ENCODE measurements at regions of chr22 and their contacts with region 1.

Region 1: GRCh38 chr22:37486224-37486845 is at the start of gene MFNG:
- DNase-seq: peak; percentile 61 to 84 (median 64)
- H3K4me3 ChIP-seq: peak within 1 kb of the TSS; percentile 85 to 87
- H3K4me3 Mint-ChIP-seq: peak within 1 kb of the TSS; percentile 89 to 98 (median 96)
- H3K27ac ChIP-seq: peak within 1 kb of the TSS; percentile 85
- H3K27ac Mint-ChIP-seq: peak within 1 kb of the TSS; percentile 94 to 98 (median 97)
- H3K4me1 ChIP-seq: peaks cover 63% of the 10 kb centered on the region
- H3K4me1 Mint-ChIP-seq: peaks cover 39 to 87% (median 57%) of the 10 kb centered on the region in 4 donors
- H3K27me3 ChIP-seq: no peaks in the 10 kb centered on the region
- H3K27me3 Mint-ChIP-seq: no peaks in the 10 kb centered on the region
- total RNA-seq, gene MFNG: 213 to 218 TPM

Region 2: GRCh38 chr22:37157516-37158289 is 328.6 kb before region 1 on chr22:
- CTCF ChIA-PET with region 1: no interaction called
- POLR2A ChIA-PET with region 1: no interaction called
- intact Hi-C with region 1: no loop called
- DNase-seq: no peak
- H3K4me3 ChIP-seq: no peak overlapping the region
- H3K4me3 Mint-ChIP-seq: peak overlapping the region in 1 of 8 donors; percentile 11
- H3K27ac ChIP-seq: no peak overlapping the region
- H3K27ac Mint-ChIP-seq: peak overlapping the region in 5 of 7 donors; percentile 8 to 89 (median 67)
- H3K4me1 ChIP-seq: peaks cover 14% of the 10 kb centered on the region
- H3K4me1 Mint-ChIP-seq: peaks cover 11 to 45% (median 32%) of the 10 kb centered on the region in 4 donors
- H3K27me3 ChIP-seq: no peaks in the 10 kb centered on the region
- H3K27me3 Mint-ChIP-seq: no peaks in the 10 kb centered on the region

Region 3: DNA sequence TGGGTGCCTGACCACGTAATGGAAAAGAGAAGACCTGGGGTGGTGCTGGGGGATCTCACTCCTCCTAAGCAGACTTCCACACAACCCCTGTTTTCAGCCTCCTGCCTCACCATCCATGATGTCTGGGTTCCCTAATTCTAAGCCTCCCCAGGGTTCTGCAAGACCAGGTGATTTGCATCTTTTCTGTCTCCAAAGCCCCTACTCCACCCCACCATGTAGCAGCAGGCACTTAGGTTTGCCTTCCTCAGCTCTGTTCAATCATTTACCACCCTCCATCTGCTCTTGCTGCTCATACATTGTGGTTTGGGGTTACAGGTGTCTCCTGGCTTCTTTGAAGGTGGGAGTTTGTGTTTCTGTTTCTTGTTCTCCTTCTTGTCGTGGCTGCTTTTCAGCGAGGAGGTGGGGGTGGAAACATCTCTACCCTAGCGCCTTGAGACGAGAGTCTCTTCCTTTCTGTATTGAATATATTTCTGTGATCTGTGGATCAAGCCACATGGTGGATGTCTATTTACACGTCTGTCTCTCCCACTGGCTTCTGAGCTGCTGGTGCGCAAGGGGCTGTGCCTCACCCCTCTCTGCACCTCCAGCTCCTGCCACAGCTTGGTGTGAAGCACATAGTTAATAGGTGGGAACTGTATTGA is 267.4 kb before region 1 on chr22:
- CTCF ChIA-PET with region 1: no interaction called
- POLR2A ChIA-PET with region 1: interaction called, 14 read pairs
- intact Hi-C with region 1: no loop called
- DNase-seq: peak; percentile 86 to 96 (median 91)
- H3K4me3 ChIP-seq: peak overlapping the region; percentile 15 to 51
- H3K4me3 Mint-ChIP-seq: peak overlapping the region; percentile 67 to 90 (median 84)
- H3K27ac ChIP-seq: peak overlapping the region; percentile 58
- H3K27ac Mint-ChIP-seq: peak overlapping the region; percentile 87 to 98 (median 95)
- H3K4me1 ChIP-seq: peaks cover 73% of the 10 kb centered on the region
- H3K4me1 Mint-ChIP-seq: peaks cover 58 to 79% (median 64%) of the 10 kb centered on the region in 4 donors
- H3K27me3 ChIP-seq: no peaks in the 10 kb centered on the region
- H3K27me3 Mint-ChIP-seq: no peaks in the 10 kb centered on the region

Region 4: DNA sequence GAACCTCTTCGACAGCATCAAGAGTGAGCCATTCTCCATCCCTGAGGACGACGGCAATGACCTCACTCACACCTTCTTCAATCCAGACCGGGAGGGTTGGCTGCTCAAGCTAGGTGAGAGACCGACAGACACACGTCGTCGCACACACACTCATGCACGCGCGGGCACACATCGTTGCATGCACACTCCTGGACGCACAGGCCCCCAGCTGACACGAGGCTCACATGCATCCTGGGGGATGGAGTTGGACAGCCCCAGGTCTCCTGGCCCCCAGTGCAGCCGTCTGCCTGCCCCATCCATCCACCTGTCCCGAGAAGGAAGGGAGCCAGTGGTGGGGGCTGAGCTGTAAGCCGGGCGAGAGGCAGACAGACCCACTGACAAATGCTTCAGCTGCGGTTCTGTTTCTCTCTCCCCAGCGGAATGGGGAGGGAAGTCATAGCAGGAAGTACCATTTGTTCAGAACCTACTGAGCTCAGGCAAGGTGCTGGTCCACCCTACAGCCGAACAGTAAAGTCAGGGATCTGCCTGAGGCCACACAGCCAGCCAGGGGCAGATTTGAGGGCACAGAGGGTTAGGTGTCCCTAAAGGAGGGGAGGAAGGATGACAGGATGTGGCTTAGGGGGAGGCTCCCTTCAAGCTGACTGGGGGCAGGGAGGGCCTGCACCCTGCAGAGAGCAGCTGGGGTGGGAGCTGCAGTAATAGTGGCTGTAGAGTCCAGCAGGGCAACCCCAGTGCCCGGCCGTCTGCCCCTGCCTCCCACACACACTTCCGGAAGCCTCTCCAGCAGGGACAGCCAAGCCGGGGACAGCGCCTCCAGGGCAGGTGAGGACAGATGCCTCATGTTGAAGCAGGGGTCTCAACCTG is 176.9 kb before region 1 on chr22:
- CTCF ChIA-PET with region 1: no interaction called
- POLR2A ChIA-PET with region 1: interaction called, 19 read pairs
- intact Hi-C with region 1: no loop called
- DNase-seq: peak; percentile 61 to 72 (median 67)
- H3K4me3 ChIP-seq: peak overlapping the region; percentile 49 to 54
- H3K4me3 Mint-ChIP-seq: peak overlapping the region; percentile 79 to 90 (median 82)
- H3K27ac ChIP-seq: peak overlapping the region; percentile 59
- H3K27ac Mint-ChIP-seq: peak overlapping the region; percentile 70 to 100 (median 92)
- H3K4me1 ChIP-seq: peaks cover 78% of the 10 kb centered on the region
- H3K4me1 Mint-ChIP-seq: peaks cover 56 to 94% (median 70%) of the 10 kb centered on the region in 4 donors
- H3K27me3 ChIP-seq: no peaks in the 10 kb centered on the region
- H3K27me3 Mint-ChIP-seq: no peaks in the 10 kb centered on the region

Region 5: GRCh38 chr22:37498289-37498909 is 12.1 kb after region 1 on chr22:
- CTCF ChIA-PET with region 1: interaction called, 12 read pairs
- POLR2A ChIA-PET with region 1: interaction called, 27 read pairs
- intact Hi-C with region 1: no loop called
- DNase-seq: peak; percentile 68 to 72 (median 70)
- H3K4me3 ChIP-seq: no peak overlapping the region
- H3K4me3 Mint-ChIP-seq: no peak overlapping the region
- H3K27ac ChIP-seq: no peak overlapping the region
- H3K27ac Mint-ChIP-seq: no peak overlapping the region
- H3K4me1 ChIP-seq: peaks cover 19% of the 10 kb centered on the region
- H3K4me1 Mint-ChIP-seq: peaks cover 8 to 25% (median 16%) of the 10 kb centered on the region in 4 donors
- H3K27me3 ChIP-seq: peaks cover 3% of the 10 kb centered on the region
- H3K27me3 Mint-ChIP-seq: no peaks in the 10 kb centered on the region

Region 6: DNA sequence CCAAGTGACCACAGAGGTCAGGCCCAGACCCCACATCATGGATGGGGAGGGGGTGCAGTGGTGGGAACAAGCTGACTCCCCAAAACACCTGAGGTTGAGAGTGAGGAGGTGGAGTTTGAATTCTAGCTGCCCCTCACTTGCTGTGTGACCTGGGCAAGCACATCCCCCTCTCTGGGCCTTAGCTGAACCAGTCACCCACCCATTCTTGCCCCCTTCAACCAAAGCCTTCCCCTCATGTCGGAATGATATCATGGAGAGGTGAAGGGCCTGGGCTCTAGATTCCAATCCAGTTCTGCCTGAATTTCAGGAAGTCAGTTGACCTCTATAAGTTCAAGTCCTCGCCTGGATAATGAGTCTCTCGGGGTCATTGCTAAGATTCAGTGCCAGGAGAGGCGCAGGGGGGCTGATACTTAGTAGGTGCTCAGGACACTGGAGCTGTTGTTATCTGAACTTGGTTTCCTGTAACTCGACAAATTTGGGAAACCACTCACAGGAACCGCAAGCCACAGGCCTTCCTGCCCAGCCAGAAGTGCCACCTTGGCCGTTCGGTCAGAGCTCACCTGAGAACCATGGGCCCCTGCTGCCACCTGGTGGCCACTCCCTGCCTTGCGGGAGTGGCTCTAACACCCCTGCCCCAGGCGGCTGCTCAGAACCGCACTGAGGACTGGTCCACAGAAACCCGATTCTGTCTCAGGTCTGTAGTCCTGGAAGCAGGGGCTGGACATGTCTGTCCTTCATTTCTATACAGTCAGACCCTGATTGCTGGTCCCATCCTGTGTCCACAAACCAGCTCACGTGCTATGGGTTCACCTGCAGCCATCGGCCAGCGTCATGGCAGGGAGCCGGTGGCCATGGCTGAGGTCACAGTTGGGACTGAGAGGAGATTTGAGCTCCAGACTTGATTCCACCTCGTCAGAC is 80.8 kb after region 1 on chr22:
- CTCF ChIA-PET with region 1: interaction called, 6 read pairs
- POLR2A ChIA-PET with region 1: interaction called, 15 read pairs
- intact Hi-C with region 1: loop called (anchors 2 kb)
- DNase-seq: peak; percentile 87 to 91 (median 89)
- H3K4me3 ChIP-seq: peak overlapping the region; percentile 6 to 15
- H3K4me3 Mint-ChIP-seq: peak overlapping the region; percentile 58 to 85 (median 70)
- H3K27ac ChIP-seq: no peak overlapping the region
- H3K27ac Mint-ChIP-seq: peak overlapping the region; percentile 8 to 81 (median 57)
- H3K4me1 ChIP-seq: peaks cover 23% of the 10 kb centered on the region
- H3K4me1 Mint-ChIP-seq: peaks cover 11 to 36% (median 25%) of the 10 kb centered on the region in 4 donors
- H3K27me3 ChIP-seq: peaks cover 11% of the 10 kb centered on the region
- H3K27me3 Mint-ChIP-seq: peaks cover 14 to 24% of the 10 kb centered on the region in 2 donors

Region 7: DNA sequence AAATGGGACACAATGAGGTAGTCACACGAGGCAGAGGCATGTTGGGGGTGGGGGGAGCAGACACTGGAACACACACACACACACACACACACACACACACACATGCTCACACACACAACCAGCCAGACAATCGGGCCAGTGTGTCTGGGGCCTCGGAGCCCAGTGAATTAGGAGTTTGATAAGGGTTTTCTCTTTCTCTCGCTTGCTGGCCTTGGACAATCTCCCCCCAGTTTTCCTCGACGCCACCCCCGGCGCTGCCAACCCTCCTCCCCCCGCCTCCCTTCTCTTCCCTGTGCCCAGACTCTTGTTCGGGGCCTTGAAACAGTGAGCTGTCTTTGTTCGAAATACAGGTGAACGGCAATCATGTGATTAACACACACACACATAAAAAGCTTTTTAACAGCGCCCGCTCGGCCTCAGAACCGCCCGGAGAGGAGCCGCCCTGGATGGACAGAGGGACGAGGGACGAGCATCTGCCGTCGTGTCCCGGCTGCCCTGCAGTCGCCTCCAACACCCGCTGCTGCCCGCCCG is 499.5 kb after region 1 on chr22:
- CTCF ChIA-PET with region 1: no interaction called
- POLR2A ChIA-PET with region 1: no interaction called
- intact Hi-C with region 1: no loop called
- DNase-seq: no peak
- H3K4me3 ChIP-seq: no peak overlapping the region
- H3K4me3 Mint-ChIP-seq: no peak overlapping the region
- H3K27ac ChIP-seq: no peak overlapping the region
- H3K27ac Mint-ChIP-seq: no peak overlapping the region
- H3K4me1 ChIP-seq: no peaks in the 10 kb centered on the region
- H3K4me1 Mint-ChIP-seq: no peaks in the 10 kb centered on the region
- H3K27me3 ChIP-seq: no peaks in the 10 kb centered on the region
- H3K27me3 Mint-ChIP-seq: no peaks in the 10 kb centered on the region

Region 8: GRCh38 chr22:38455530-38456271 is 969.4 kb after region 1 on chr22:
- CTCF ChIA-PET with region 1: no interaction called
- POLR2A ChIA-PET with region 1: no interaction called
- intact Hi-C with region 1: no loop called
- DNase-seq: no peak
- H3K4me3 ChIP-seq: no peak overlapping the region
- H3K4me3 Mint-ChIP-seq: peak overlapping the region in 2 of 8 donors; percentile 73 to 88
- H3K27ac ChIP-seq: no peak overlapping the region
- H3K27ac Mint-ChIP-seq: no peak overlapping the region
- H3K4me1 ChIP-seq: peaks cover 8% of the 10 kb centered on the region
- H3K4me1 Mint-ChIP-seq: peaks cover 7 to 30% (median 13%) of the 10 kb centered on the region in 4 donors
- H3K27me3 ChIP-seq: peaks cover 34% of the 10 kb centered on the region
- H3K27me3 Mint-ChIP-seq: peaks cover 40 to 64% of the 10 kb centered on the region in 2 donors

Measured in CD4-positive, alpha-beta memory T cell (primary cell).